ENCODE measurements at regions of chr4 and their contacts with region 1.

Region 1: GRCh38 chr4:75525910-75526309 is 11.6 kb downstream of the THAP6 start:
- DNase-seq: no peak
- ATAC-seq: no peak
- H3K4me3 ChIP-seq: no peak overlapping the region
- H3K27ac ChIP-seq: no peak overlapping the region
- H3K4me1 ChIP-seq: no peaks in the 10 kb centered on the region
- H3K27me3 ChIP-seq: no peaks in the 10 kb centered on the region
- CTCF ChIP-seq: no peak
- EP300 ChIP-seq: no peak
- POLR2A ChIP-seq: no peak
- RAD21 ChIP-seq: no peak

Region 2: GRCh38 chr4:75502671-75503070 is 23.2 kb before region 1 on chr4:
- CTCF ChIA-PET with region 1: no interaction called
- POLR2A ChIA-PET with region 1: no interaction called
- in situ Hi-C with region 1: no loop called
- intact Hi-C with region 1: no loop called
- DNase-seq: no peak
- ATAC-seq: no peak
- H3K4me3 ChIP-seq: no peak overlapping the region
- H3K27ac ChIP-seq: no peak overlapping the region
- H3K4me1 ChIP-seq: peaks cover 32% of the 10 kb centered on the region
- H3K27me3 ChIP-seq: no peaks in the 10 kb centered on the region
- CTCF ChIP-seq: no peak
- EP300 ChIP-seq: no peak
- POLR2A ChIP-seq: no peak
- RAD21 ChIP-seq: no peak

Region 3: GRCh38 chr4:75514131-75514948 is 11.6 kb before region 1 on chr4 and contains the starts of genes RCHY1 and THAP6:
- CTCF ChIA-PET with region 1: no interaction called
- POLR2A ChIA-PET with region 1: interaction called, 10 read pairs
- in situ Hi-C with region 1: no loop called
- intact Hi-C with region 1: no loop called
- DNase-seq: peak; percentile 96
- ATAC-seq: peak; percentile 98
- H3K4me3 ChIP-seq: peak within 1 kb of the TSS; percentile 81 to 98 (median 89)
- H3K27ac ChIP-seq: peak within 1 kb of the TSS; percentile 77
- H3K4me1 ChIP-seq: peaks cover 45% of the 10 kb centered on the region
- H3K27me3 ChIP-seq: no peaks in the 10 kb centered on the region; a peak in 1 of 5 replicates
- CTCF ChIP-seq: peak; percentile 13
- EP300 ChIP-seq: peak in 1 of 2 experiments; percentile 32; a peak in 1 of 4 replicates
- POLR2A ChIP-seq: peak; percentile 94 to 97
- RAD21 ChIP-seq: peak; percentile 48
- total RNA-seq, gene RCHY1: 30.5 and 42.6 TPM in 2 replicates
- total RNA-seq, gene THAP6: 9.3 and 10.6 TPM in 2 replicates

Region 4: GRCh38 chr4:76470064-76470463 is 944.2 kb after region 1 on chr4:
- CTCF ChIA-PET with region 1: no interaction called
- POLR2A ChIA-PET with region 1: no interaction called
- in situ Hi-C with region 1: no loop called
- intact Hi-C with region 1: no loop called
- DNase-seq: no peak
- ATAC-seq: no peak
- H3K4me3 ChIP-seq: no peak overlapping the region
- H3K27ac ChIP-seq: no peak overlapping the region
- H3K4me1 ChIP-seq: no peaks in the 10 kb centered on the region
- H3K27me3 ChIP-seq: no peaks in the 10 kb centered on the region
- CTCF ChIP-seq: no peak
- EP300 ChIP-seq: no peak
- POLR2A ChIP-seq: no peak
- RAD21 ChIP-seq: no peak